ENCODE measurements at regions of chr18 and their contacts with region 1.

Region 1: GRCh38 chr18:43271593-43272432 is 5.5 kb downstream of the SYT4 start:
- DNase-seq: no peak
- ATAC-seq: no peak
- H3K4me3 ChIP-seq: no peak overlapping the region
- H3K27ac ChIP-seq: no peak overlapping the region
- H3K4me1 ChIP-seq: no peaks in the 10 kb centered on the region
- H3K27me3 ChIP-seq: peaks cover 0 to 3% (median 0%) of the 10 kb centered on the region in 9 donors
- CTCF ChIP-seq: peak; percentile 66 to 87 (median 78)
- POLR2A ChIP-seq: no peak

Region 2: GRCh38 chr18:42107691-42108450 is 1163.9 kb before region 1 on chr18:
- intact Hi-C with region 1: loop called in 6 of 10 experiments (anchors 5 to 10 kb)
- DNase-seq: no peak
- ATAC-seq: no peak
- H3K4me3 ChIP-seq: no peak overlapping the region
- H3K27ac ChIP-seq: no peak overlapping the region
- H3K4me1 ChIP-seq: no peaks in the 10 kb centered on the region
- H3K27me3 ChIP-seq: no peaks in the 10 kb centered on the region
- CTCF ChIP-seq: no peak
- POLR2A ChIP-seq: no peak

Region 3: DNA sequence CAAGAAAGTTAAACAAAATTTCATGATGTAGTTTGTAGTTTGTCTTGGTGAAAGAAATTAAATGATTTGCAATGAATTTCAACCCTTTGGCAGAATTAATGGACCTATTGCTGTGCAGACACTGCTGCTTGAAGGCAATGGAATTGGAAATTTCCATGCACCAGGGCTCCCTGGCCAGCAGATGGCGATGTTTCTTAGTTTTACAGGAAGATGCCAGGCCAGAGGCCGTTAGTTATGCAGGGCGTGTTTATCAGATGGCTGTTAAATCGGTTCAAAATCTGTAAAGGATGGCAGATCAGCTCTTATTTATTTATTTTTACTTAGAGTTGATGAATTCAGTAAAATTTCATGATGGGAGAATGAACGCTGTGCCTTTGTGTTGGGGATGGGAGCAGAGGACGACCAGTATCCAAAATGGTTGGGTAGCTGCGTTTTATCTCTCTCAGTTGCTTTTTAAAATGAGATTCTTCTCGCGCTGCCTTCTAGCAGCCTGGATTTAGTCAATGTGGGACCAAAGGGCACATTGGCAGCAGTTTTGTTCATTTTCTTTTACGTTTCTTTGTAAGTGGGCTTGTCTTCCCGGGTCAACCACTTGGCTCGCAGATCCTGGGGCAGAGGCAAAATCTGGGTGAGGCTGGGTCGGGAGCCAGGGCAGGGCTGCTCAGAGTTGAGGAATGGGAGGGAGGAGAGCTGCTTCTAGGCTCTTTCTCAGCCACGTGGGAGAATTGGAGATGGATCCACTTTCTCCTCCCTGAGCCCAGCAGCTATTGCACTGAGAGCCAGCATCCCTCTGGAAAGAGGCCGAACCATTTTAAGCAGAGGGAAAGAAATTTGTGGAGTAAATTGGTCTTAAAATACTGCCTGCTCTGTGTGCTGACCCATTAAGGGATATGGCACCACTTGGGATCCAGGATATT is 972.8 kb before region 1 on chr18:
- intact Hi-C with region 1: loop called (anchors 2 to 10 kb)
- DNase-seq: peak in 4 of 5 donors; percentile 54 to 58 (median 57)
- ATAC-seq: peak; percentile 20 to 94 (median 82)
- H3K4me3 ChIP-seq: peak overlapping the region in 11 of 12 donors; percentile 1 to 43 (median 19)
- H3K27ac ChIP-seq: peak overlapping the region in 6 of 12 donors; percentile 9 to 40 (median 27)
- H3K4me1 ChIP-seq: peaks cover 0 to 3% (median 0%) of the 10 kb centered on the region in 12 donors
- H3K27me3 ChIP-seq: no peaks in the 10 kb centered on the region
- CTCF ChIP-seq: peak; percentile 83 to 96 (median 90)
- POLR2A ChIP-seq: no peak

Region 4: DNA sequence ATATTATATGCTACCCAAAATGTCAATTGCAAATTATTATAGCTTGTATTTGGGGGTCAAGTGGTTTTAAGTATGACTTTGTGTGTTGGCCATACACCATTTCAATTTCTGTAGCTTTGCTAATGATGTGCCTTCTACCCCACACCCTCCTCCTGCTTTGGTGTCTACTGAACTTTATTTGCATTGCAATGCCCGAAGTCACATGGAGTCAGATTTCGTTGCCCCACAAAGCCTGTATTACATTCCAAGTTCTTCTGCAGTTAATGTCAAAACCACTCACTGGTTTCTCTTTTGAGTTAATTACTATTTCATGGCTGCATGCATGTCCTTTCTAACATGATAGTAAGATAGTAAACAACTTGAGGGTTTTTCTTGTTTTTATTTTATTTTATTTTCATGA is 685.2 kb before region 1 on chr18:
- intact Hi-C with region 1: loop called in 3 of 10 experiments (anchors 10 kb)
- DNase-seq: no peak
- ATAC-seq: no peak
- H3K4me3 ChIP-seq: no peak overlapping the region
- H3K27ac ChIP-seq: no peak overlapping the region
- H3K4me1 ChIP-seq: no peaks in the 10 kb centered on the region
- H3K27me3 ChIP-seq: no peaks in the 10 kb centered on the region
- CTCF ChIP-seq: no peak
- POLR2A ChIP-seq: no peak